Activated B cell treated with CpG ODN at 0.5 μM for 24 hours (primary cell): ENCODE measurements at regions of chr1 and their contacts with region 1.

Region 1: DNA sequence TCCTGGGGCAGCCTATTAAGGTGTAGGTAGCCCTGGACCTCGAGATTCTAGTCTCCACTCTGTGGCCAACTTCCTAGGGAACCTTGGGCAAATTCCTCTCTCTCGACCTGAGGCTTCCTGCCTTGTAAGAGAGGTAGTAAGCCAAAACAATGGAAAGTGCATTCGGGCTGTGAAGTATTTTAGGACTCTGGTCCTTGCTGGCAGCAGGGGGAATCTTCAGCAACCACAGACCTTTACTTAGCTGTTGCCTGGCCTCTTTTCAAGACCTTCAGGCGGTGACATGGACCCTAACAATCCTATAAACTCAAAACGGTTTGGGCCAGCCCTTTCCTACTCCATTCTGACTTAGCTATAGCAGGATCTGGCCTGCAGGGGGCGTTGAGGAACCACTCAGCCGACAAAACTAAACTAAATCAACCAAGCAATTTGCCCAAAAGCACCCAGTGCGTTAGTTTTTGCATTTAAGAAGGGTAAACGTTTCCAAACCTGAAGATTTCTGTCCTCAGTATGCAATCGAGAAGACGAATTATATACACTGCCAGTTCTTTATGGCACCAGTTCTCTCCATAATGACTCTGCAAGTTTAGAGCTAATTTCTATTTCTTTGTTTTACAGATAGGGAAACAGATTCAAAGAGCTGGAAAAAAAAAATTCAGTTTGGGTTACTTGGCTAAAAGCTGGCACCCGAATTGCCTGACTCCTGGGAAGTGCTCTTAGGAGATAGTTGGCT is 10.9 kb upstream of the SESN2 start:
- DNase-seq: peak; percentile 69
- ATAC-seq: peak; percentile 23
- H3K4me3 Mint-ChIP-seq: peak overlapping the region; percentile 72
- H3K27ac Mint-ChIP-seq: peak overlapping the region; percentile 99
- H3K4me1 Mint-ChIP-seq: peaks cover 58% of the 10 kb centered on the region
- H3K27me3 Mint-ChIP-seq: no peaks in the 10 kb centered on the region
- CTCF ChIP-seq: peak; percentile 57

Region 2: DNA sequence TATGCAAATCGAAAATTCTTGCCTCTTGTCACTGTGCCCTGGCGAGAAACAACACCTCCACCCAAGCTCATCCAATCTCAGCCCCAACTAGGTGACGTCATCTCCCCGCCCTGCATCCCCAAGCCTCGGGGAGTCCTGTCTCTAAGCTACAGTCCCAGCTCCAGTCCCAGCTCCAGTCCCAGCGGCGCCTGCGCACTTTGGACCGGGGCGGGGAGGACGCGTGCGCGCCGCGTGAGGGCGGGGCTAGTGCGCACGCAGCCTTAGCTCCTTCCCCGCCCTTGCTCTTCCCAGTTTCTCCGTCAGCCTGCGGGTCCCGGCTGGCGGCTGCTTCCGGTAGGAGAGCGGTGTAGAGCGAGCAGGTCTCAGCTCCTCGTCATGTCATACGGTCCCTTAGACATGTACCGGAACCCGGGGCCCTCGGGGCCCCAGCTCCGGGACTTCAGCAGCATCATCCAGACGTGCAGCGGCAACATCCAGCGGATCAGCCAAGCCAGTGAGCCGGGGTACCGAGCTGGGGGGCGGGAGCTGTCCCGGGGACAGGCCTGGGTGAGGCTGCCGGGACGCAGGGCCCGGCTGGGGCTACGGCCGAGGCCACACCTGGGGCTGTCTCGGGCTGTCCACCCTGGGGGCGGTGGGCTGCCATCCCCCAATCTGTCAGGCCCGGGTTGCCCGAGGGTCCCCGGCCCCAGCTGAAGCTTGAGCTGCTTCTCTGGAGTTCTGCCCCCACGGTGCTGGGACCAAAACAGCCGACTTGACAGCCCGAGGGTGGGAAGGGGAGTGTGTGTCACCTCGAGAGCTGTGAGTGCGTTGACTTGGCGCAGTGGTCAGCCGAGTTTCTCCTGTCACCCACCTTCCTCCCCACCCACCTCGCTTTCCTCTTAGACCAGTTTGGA is 475.3 kb before region 1 on chr1 and contains the start of gene STX12:
- CTCF ChIA-PET with region 1: no interaction called
- POLR2A ChIA-PET with region 1: interaction called, 5 read pairs
- intact Hi-C with region 1: loop called (anchors 5 kb)
- DNase-seq: peak; percentile 97
- ATAC-seq: peak; percentile 93
- H3K4me3 Mint-ChIP-seq: peak within 1 kb of the TSS; percentile 93
- H3K27ac Mint-ChIP-seq: peak within 1 kb of the TSS; percentile 98
- H3K4me1 Mint-ChIP-seq: peaks cover 37% of the 10 kb centered on the region
- H3K27me3 Mint-ChIP-seq: no peaks in the 10 kb centered on the region
- CTCF ChIP-seq: no peak
- total RNA-seq, gene STX12: 33.5 and 42.4 TPM in 2 replicates

Region 3: GRCh38 chr1:28259307-28260167 is 11.1 kb after region 1 on chr1 and contains the start of gene SESN2:
- CTCF ChIA-PET with region 1: interaction called, 17 read pairs
- POLR2A ChIA-PET with region 1: interaction called, 69 read pairs
- intact Hi-C with region 1: loop called (anchors 1 kb)
- DNase-seq: peak; percentile 99
- ATAC-seq: peak; percentile 98
- H3K4me3 Mint-ChIP-seq: peak within 1 kb of the TSS; percentile 82
- H3K27ac Mint-ChIP-seq: peak within 1 kb of the TSS; percentile 79
- H3K4me1 Mint-ChIP-seq: peaks cover 23% of the 10 kb centered on the region
- H3K27me3 Mint-ChIP-seq: peaks cover 6% of the 10 kb centered on the region
- CTCF ChIP-seq: no peak
- total RNA-seq, gene SESN2: 19.5 and 19.8 TPM in 2 replicates

Region 4: GRCh38 chr1:28369371-28370238 is 121.2 kb after region 1 on chr1 and contains the start of gene PHACTR4:
- CTCF ChIA-PET with region 1: interaction called, 8 read pairs
- POLR2A ChIA-PET with region 1: interaction called, 4 read pairs
- intact Hi-C with region 1: loop called (anchors 2 kb)
- DNase-seq: peak; percentile 74
- ATAC-seq: peak; percentile 89
- H3K4me3 Mint-ChIP-seq: peak within 1 kb of the TSS; percentile 96
- H3K27ac Mint-ChIP-seq: peak within 1 kb of the TSS; percentile 98
- H3K4me1 Mint-ChIP-seq: peaks cover 21% of the 10 kb centered on the region
- H3K27me3 Mint-ChIP-seq: no peaks in the 10 kb centered on the region
- CTCF ChIP-seq: no peak
- total RNA-seq, gene PHACTR4: 27.2 and 31.5 TPM in 2 replicates

Region 5: DNA sequence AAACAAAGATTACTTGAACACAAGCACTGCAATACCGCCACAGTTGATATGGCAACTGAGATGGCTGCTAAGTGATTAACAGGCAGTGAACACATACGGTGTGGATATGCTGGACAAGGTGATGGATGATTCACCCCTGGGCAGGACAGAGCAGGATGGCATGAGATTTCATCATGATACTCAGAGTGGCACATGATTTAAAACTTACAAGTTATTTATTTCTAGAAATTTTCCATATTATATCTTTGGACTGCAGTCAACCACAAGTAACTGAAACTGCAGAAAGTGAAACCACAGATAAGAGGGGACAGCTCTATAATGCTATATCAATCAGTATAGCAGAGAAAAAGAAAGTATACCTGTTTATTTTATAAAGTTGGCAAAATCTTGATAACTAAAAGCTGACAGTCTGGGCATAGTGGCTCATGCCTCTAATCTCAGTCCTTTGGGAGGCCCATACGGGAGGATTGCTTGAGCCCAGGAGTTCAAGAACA is 169.0 kb after region 1 on chr1:
- CTCF ChIA-PET with region 1: no interaction called
- POLR2A ChIA-PET with region 1: no interaction called
- intact Hi-C with region 1: no loop called
- DNase-seq: no peak
- ATAC-seq: peak; percentile 62
- H3K4me3 Mint-ChIP-seq: peak overlapping the region; percentile 5
- H3K27ac Mint-ChIP-seq: peak overlapping the region; percentile 41
- H3K4me1 Mint-ChIP-seq: peaks cover 14% of the 10 kb centered on the region
- H3K27me3 Mint-ChIP-seq: no peaks in the 10 kb centered on the region
- CTCF ChIP-seq: no peak

Region 6: GRCh38 chr1:28505406-28506187 is 257.1 kb after region 1 on chr1 and contains the start of gene RCC1:
- CTCF ChIA-PET with region 1: interaction called, 3 read pairs
- POLR2A ChIA-PET with region 1: interaction called, 111 read pairs
- intact Hi-C with region 1: loop called (anchors 2 kb)
- DNase-seq: peak; percentile 82
- ATAC-seq: peak; percentile 87
- H3K4me3 Mint-ChIP-seq: peak within 1 kb of the TSS; percentile 98
- H3K27ac Mint-ChIP-seq: peak within 1 kb of the TSS; percentile 98
- H3K4me1 Mint-ChIP-seq: peaks cover 38% of the 10 kb centered on the region
- H3K27me3 Mint-ChIP-seq: no peaks in the 10 kb centered on the region
- CTCF ChIP-seq: no peak
- total RNA-seq, gene RCC1: 45.2 and 47.5 TPM in 2 replicates

Region 7: DNA sequence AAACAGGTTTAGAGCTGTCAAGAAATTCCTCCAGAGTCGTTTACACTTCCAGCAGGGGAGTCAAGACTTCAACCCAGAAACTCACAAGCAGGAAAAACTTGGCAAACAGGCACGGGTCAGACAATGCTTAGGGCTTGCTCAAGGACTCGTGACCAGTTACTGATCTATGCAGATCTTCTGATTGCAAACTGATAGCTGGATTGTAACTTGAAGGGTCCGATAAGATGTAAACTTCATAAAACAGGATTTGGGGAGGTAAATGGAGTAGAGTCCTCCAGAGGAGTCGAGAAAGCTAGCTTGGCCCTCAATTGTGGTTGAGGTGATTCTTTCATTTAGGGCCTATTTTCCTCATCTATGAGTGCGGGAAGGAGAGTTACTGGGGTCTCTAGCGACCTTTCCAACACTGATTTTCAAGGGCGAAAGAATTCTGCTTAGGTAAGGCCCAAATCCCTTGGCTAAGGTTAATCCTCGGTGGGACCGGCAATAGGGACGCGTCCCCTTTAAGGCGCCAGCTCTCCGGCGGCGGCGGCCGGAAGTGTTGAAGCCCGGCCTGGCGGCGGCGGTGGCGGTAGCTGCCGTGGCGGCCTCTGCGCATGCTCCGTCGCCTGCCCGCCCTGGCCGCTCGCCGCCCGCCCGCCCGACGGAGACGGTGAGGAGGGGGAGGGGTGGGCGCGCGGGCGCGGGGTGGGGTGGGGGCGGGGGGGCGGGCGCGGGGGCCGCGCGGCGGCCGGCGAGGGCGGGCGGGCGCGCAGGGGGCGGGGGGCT is 419.9 kb after region 1 on chr1 and contains the start of gene GMEB1:
- CTCF ChIA-PET with region 1: no interaction called
- POLR2A ChIA-PET with region 1: interaction called, 10 read pairs
- intact Hi-C with region 1: loop called (anchors 5 kb)
- DNase-seq: peak; percentile 73
- ATAC-seq: peak; percentile 65
- H3K4me3 Mint-ChIP-seq: peak within 1 kb of the TSS; percentile 92
- H3K27ac Mint-ChIP-seq: peak within 1 kb of the TSS; percentile 97
- H3K4me1 Mint-ChIP-seq: peaks cover 17% of the 10 kb centered on the region
- H3K27me3 Mint-ChIP-seq: no peaks in the 10 kb centered on the region
- CTCF ChIP-seq: no peak
- total RNA-seq, gene GMEB1: 26.8 and 27.4 TPM in 2 replicates

Region 8: GRCh38 chr1:28926629-28927265 is 678.3 kb after region 1 on chr1:
- CTCF ChIA-PET with region 1: no interaction called
- POLR2A ChIA-PET with region 1: no interaction called
- intact Hi-C with region 1: loop called (anchors 5 kb)
- DNase-seq: no peak
- ATAC-seq: peak; percentile 83
- H3K4me3 Mint-ChIP-seq: peak overlapping the region; percentile 74
- H3K27ac Mint-ChIP-seq: peak overlapping the region; percentile 80
- H3K4me1 Mint-ChIP-seq: peaks cover 70% of the 10 kb centered on the region
- H3K27me3 Mint-ChIP-seq: no peaks in the 10 kb centered on the region
- CTCF ChIP-seq: no peak